Activated T-helper 1 cell treated with anti-CD3 and anti-CD28 coated beads, Interleukin-12 subunit alpha, Interleukin-12 subunit beta, Interleukin-2, Interleukin-4 antibody, amounts not matched to agents 30 ng/mL and 10 ng/mL and 1 ng/mL, durations not matched to agents 14 hours and 24 hours and 36 hours (primary cell): ENCODE measurements at regions of chr18 and their contacts with region 1.

Region 1: DNA sequence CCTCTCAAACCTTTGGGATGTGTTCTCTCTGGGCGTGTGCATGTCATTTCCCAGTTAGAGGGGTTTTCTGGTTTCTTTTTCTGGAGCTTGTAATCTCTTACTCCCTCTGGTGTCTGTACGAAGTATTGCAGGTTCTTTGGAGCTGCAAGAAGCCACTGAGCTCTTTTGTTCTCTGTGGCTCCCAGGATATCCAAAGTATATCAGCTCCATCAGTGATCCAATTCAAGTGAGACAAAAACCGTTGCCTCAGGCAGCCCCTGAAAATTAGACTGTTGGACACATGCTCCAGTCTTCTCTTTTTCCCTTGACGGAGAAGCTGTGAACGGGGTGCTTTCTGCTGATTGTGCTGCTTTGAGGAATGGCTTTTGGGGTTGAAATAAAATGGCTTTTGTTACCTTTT is 59.0 kb upstream of the LDLRAD4 start:
- DNase-seq: peak; percentile 30
- H3K4me3 Mint-ChIP-seq: no peak overlapping the region
- H3K27ac Mint-ChIP-seq: no peak overlapping the region
- H3K4me1 Mint-ChIP-seq: peaks cover 6% of the 10 kb centered on the region
- H3K27me3 Mint-ChIP-seq: peaks cover 1% of the 10 kb centered on the region

Region 2: DNA sequence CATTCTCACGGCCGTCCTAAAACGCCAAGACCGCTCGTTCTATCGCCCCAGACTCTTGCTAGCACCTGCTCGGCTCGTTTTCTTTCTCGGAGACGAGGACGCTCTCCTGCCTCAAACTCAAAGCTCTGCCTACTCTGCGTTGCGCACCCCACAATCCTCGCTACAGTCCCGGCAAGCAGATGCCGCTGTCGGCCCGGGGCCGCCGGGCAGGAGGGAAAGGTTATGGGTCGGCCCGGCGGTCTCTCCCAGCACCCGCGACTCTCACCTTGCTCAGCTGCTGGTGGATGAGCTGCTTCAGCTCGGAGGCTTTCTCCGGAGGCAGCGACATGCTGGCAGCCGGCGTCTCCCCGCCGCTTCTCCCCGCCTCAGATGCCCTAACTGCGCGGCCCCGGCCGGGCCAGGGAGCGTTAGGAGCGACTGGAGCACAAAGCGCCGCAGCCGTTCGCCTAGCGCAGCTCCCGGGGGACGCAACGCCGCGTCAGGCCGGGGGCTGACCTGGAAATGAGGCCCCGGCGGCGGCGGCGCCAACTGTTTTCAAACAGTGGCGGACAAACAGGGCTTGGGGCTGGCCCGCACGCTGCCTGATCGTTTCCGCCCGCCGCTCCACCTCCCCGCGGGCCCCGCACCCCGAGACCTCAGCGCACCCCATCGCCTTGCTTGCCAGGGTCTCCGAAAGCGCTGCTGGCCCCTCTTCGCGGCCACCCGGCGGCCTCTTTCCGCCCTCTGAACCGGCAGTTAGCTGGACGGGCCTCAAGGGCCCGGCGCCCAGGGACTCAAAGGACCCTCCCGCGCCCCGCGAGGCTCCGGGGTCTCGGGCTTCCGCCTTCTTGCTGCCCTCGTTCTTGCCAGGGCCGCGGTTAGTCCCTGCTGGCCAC is 457.1 kb before region 1 on chr18 and contains the starts of genes CEP76 and PSMG2:
- intact Hi-C with region 1: no loop called
- DNase-seq: peak; percentile 80
- H3K4me3 Mint-ChIP-seq: peak within 1 kb of the TSS; percentile 97
- H3K27ac Mint-ChIP-seq: peak within 1 kb of the TSS; percentile 92
- H3K4me1 Mint-ChIP-seq: peaks cover 54% of the 10 kb centered on the region
- H3K27me3 Mint-ChIP-seq: no peaks in the 10 kb centered on the region
- total RNA-seq, gene CEP76: 16.1 and 17.5 TPM in 2 replicates
- total RNA-seq, gene PSMG2: 113 and 118 TPM in 2 replicates

Region 3: GRCh38 chr18:12726774-12727550 is 432.6 kb before region 1 on chr18:
- intact Hi-C with region 1: loop called (anchors 1 kb)
- DNase-seq: peak; percentile 37
- H3K4me3 Mint-ChIP-seq: no peak overlapping the region
- H3K27ac Mint-ChIP-seq: peak overlapping the region; percentile 71
- H3K4me1 Mint-ChIP-seq: peaks cover 11% of the 10 kb centered on the region
- H3K27me3 Mint-ChIP-seq: no peaks in the 10 kb centered on the region

Region 4: DNA sequence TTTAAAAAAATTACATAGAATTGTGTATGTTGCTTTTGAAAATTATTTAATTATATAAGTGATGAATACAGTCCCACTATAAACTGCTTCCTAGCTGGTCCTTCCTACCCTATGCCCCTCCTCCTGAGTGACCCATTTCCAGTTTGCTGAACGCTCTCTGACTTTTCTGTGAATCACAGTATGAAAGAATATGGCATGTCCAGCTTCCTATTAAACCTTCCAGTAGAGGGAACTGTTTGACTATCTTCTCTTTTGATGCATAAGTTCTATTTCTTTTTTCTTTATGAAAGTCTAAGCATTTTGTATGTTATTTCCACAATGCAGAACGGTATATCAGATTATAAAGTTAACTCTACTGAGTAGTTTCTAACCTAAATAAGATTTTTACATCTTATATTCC is 415.5 kb before region 1 on chr18:
- intact Hi-C with region 1: loop called (anchors 5 kb)
- DNase-seq: no peak
- H3K4me3 Mint-ChIP-seq: no peak overlapping the region
- H3K27ac Mint-ChIP-seq: no peak overlapping the region
- H3K4me1 Mint-ChIP-seq: peaks cover 2% of the 10 kb centered on the region
- H3K27me3 Mint-ChIP-seq: no peaks in the 10 kb centered on the region

Region 5: DNA sequence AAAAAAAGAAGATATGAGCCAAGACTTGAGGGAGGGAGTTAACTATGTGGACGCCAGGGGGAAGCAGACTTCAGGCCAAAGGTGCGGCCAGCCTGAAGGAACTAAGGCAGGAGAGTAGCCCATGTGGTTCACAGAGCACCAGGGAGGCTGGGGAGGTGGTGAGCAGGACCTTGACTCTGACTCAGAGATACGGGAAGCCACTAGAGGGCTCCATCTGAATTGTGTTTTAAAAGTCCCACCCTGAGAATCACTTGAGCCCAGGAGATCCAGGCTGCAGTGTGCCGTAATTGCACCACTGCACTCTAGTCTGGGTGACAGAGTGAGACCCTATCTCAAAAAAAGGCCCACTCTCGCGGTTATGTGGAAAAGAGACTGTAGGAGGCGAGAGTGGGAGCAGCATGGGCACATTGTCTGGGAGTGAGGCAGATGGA is 156.1 kb before region 1 on chr18:
- intact Hi-C with region 1: loop called (anchors 1 kb)
- DNase-seq: no peak
- H3K4me3 Mint-ChIP-seq: no peak overlapping the region
- H3K27ac Mint-ChIP-seq: no peak overlapping the region
- H3K4me1 Mint-ChIP-seq: peaks cover 21% of the 10 kb centered on the region
- H3K27me3 Mint-ChIP-seq: no peaks in the 10 kb centered on the region

Region 6: GRCh38 chr18:13112982-13113381 is 46.6 kb before region 1 on chr18:
- intact Hi-C with region 1: loop called (anchors 2 kb)
- DNase-seq: no peak
- H3K4me3 Mint-ChIP-seq: no peak overlapping the region
- H3K27ac Mint-ChIP-seq: no peak overlapping the region
- H3K4me1 Mint-ChIP-seq: no peaks in the 10 kb centered on the region
- H3K27me3 Mint-ChIP-seq: no peaks in the 10 kb centered on the region

Region 7: DNA sequence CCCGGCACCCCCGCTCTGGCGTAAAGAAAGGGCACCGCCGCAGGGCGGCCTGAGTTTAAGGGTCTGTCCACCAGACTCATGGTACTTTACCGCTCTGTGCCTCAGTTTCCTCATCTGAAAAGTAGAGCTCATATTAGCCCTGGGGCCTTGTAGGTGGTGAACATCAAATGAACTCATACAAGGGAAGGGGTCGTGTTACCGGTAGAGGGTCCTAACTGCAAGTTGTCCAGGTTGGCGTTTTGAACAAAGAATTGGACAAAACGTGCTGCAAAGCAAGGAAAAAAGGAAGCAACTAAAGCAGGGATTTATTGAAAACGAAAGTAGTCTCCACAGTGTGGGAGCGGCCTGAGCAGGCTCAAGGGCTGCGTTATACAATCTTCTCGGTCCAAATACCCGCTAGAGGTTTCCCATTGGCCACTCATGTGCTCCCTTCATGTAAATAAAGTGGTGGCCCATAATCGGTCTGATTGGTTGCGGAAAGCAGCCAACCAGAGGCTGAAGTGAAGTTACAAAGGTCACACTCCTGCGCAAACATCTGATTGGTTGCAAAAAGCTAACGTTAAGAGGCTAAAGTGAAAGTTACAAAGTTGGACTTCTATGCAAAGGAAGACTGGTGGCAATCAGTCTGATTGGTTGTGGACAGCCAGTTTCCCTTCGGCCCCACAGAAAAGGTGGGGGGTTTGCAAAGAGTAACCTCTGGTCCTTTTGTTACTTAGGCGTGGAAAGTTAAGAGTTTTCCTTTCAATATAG is 21.7 kb before region 1 on chr18:
- intact Hi-C with region 1: loop called (anchors 2 kb)
- DNase-seq: peak; percentile 76
- H3K4me3 Mint-ChIP-seq: peak overlapping the region; percentile 91
- H3K27ac Mint-ChIP-seq: peak overlapping the region; percentile 79
- H3K4me1 Mint-ChIP-seq: peaks cover 21% of the 10 kb centered on the region
- H3K27me3 Mint-ChIP-seq: peaks cover 11% of the 10 kb centered on the region